ENCODE measurements at regions of chr3 and their contacts with region 1.

Region 1: GRCh38 chr3:33074217-33075067 is 22.5 kb downstream of the GLB1 start:
- DNase-seq: peak; percentile 76 to 93
- ATAC-seq: peak; percentile 85 to 94; a peak in 5 of 6 replicates
- H3K4me3 ChIP-seq: no peak overlapping the region
- H3K27ac ChIP-seq: no peak overlapping the region
- H3K4me1 ChIP-seq: peaks cover 5% of the 10 kb centered on the region; the same call in 1 of the 3 replicates
- CTCF ChIP-seq: peak; percentile 82
- EP300 ChIP-seq: no peak
- POLR2A ChIP-seq: no peak
- RAD21 ChIP-seq: peak; percentile 67 to 75

Region 2: GRCh38 chr3:32856355-32856889 is 218.0 kb before region 1 on chr3:
- CTCF ChIA-PET with region 1: no interaction called
- POLR2A ChIA-PET with region 1: no interaction called
- DNase-seq: peak in 1 of 2 experiments; percentile 29
- ATAC-seq: peak in 1 of 2 experiments; percentile 33; a peak in 1 of 6 replicates
- H3K4me3 ChIP-seq: no peak overlapping the region
- H3K27ac ChIP-seq: no peak overlapping the region
- H3K4me1 ChIP-seq: peaks cover 5% of the 10 kb centered on the region
- CTCF ChIP-seq: no peak
- EP300 ChIP-seq: no peak
- POLR2A ChIP-seq: no peak
- RAD21 ChIP-seq: no peak

Region 3: GRCh38 chr3:32947789-32948238 is 126.6 kb before region 1 on chr3:
- CTCF ChIA-PET with region 1: interaction called, 53 read pairs
- POLR2A ChIA-PET with region 1: no interaction called
- DNase-seq: peak; percentile 26 to 86
- ATAC-seq: peak; percentile 92 to 96
- H3K4me3 ChIP-seq: no peak overlapping the region
- H3K27ac ChIP-seq: no peak overlapping the region
- H3K4me1 ChIP-seq: no peaks in the 10 kb centered on the region
- CTCF ChIP-seq: peak; percentile 73
- EP300 ChIP-seq: no peak
- POLR2A ChIP-seq: no peak
- RAD21 ChIP-seq: peak; percentile 83 to 94

Region 4: DNA sequence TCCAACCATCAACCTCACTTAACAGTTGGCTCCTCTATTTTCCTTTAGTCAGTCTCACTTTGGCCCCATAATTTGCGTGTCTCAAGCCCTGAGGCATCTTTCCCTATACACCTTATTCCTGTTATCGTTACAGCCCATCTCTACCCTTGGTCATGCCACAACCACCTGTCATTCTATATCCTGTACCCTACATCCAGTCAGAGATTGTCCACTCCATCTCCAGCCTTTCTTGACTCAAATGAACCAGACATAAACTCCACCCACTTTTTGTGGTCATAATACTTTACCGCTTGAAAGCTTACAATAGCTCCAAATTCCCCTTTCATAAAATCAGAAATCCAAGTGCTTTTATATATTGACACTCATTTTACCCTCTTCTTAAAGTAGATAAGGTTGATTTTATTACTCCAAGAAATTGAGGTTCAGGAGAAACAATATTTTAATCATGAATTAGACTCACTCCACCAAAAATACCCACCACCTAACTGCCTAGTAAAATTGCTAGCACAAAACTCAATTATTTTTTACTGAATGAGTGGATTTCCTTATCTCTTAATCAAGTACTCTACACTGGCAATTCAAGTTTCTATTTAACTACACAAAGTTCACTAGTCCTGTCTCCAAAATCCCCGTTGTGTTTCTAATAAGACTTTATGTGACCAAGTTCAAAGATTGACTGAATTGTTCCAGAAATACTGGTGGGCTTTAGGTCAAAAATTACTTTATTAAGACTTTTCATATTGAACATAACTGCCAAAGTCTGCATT is 113.9 kb before region 1 on chr3:
- CTCF ChIA-PET with region 1: no interaction called
- POLR2A ChIA-PET with region 1: no interaction called
- DNase-seq: no peak
- ATAC-seq: no peak
- H3K4me3 ChIP-seq: no peak overlapping the region
- H3K27ac ChIP-seq: no peak overlapping the region
- H3K4me1 ChIP-seq: no peaks in the 10 kb centered on the region
- CTCF ChIP-seq: no peak
- EP300 ChIP-seq: no peak
- POLR2A ChIP-seq: no peak
- RAD21 ChIP-seq: no peak

Region 5: DNA sequence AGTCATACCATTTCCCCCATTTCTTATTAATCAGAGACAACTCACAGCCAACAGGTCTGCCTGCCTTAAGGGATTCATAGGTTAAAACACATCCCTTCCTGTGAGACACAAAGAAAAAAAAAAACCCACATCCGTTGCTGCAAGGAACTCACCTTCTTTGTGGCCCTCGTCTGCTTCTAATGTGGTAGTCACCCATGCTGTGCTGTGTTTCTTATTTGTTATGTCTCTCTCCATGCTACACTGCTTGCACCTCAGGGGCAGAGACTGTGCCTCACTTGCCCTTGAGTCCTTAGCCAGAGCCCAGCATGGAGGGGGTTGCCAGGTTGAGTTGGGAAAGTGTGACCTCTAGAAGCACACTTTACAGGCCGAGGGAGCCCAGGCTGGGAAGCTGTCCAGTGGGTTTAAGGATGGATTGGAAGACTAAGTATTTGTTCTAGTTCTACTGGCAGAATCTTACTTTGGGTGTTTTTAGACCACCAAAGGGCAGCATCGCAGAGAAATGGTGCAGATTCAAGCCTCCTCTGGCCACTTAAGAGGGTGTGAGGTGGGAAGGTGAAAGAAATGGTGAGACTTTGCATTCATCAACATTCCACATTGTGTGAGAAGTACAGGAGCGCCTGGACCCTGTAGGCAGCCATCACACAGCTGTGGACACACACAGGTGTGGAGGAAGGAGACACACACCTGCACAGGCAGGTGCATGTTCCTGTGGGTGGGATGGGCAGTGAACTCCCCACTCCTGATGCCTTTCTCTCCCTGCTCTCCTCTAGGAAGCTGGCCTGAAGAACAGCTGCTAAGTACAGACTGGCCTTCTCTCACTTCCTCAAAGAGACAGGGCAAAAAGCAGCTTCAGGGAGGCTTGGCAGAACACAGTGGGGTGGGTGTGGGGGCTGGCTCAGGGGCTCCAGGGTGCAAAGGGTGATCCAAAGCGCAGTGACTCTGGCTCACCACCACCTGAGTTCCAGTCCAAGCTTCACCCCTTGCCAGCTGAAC is 26.3 kb before region 1 on chr3:
- CTCF ChIA-PET with region 1: interaction called, 16 read pairs
- POLR2A ChIA-PET with region 1: no interaction called
- DNase-seq: no peak
- ATAC-seq: 0 out of 6 replicates have a peak, but pooled peaks of 1 of the 2 experiments have one; percentile 19
- H3K4me3 ChIP-seq: no peak overlapping the region
- H3K27ac ChIP-seq: no peak overlapping the region
- H3K4me1 ChIP-seq: no peaks in the 10 kb centered on the region
- CTCF ChIP-seq: no peak
- EP300 ChIP-seq: no peak
- POLR2A ChIP-seq: no peak
- RAD21 ChIP-seq: no peak

Region 6: DNA sequence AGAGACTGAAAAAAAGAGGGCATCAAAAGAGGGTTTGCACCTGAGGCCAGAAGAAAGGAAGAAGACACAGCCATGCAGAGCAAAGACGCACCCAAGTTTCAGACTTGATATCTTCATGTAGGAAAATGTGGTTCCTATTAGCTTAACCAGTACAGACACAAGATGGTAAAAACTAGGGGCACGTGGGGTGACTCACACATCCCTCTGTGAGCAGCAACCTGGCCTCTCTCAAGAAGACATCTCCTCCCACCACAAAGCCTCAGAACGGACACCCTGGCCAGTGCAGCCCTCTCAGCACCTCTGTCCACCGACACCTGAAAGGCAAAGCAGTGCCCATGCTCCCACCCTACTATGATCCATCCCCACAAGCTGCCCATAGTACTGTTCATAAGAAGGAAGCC is 10.8 kb before region 1 on chr3:
- CTCF ChIA-PET with region 1: interaction called, 57 read pairs
- POLR2A ChIA-PET with region 1: no interaction called
- DNase-seq: no peak
- ATAC-seq: no peak; a peak in 1 of 6 replicates
- H3K4me3 ChIP-seq: no peak overlapping the region
- H3K27ac ChIP-seq: no peak overlapping the region
- H3K4me1 ChIP-seq: no peaks in the 10 kb centered on the region
- CTCF ChIP-seq: no peak
- EP300 ChIP-seq: no peak
- POLR2A ChIP-seq: no peak
- RAD21 ChIP-seq: no peak

Region 7: GRCh38 chr3:33096093-33096868 is 21.8 kb after region 1 on chr3:
- CTCF ChIA-PET with region 1: interaction called, 25 read pairs
- POLR2A ChIA-PET with region 1: interaction called, 3 read pairs
- DNase-seq: peak; percentile 18 to 45
- ATAC-seq: peak; percentile 63 to 70
- H3K4me3 ChIP-seq: peak overlapping the region; percentile 96
- H3K27ac ChIP-seq: peak overlapping the region; percentile 96 to 97
- H3K4me1 ChIP-seq: peaks cover 11% of the 10 kb centered on the region
- CTCF ChIP-seq: no peak
- EP300 ChIP-seq: no peak
- POLR2A ChIP-seq: no peak
- RAD21 ChIP-seq: no peak